Activated CD4-positive, alpha-beta memory T cell treated with anti-CD3 and anti-CD28 coated beads, Interleukin-2, amount 10 ng/mL, durations not matched to agents 7 days and 5 days (primary cell): ENCODE measurements at regions of chr13 and their contacts with region 1.

Region 1: DNA sequence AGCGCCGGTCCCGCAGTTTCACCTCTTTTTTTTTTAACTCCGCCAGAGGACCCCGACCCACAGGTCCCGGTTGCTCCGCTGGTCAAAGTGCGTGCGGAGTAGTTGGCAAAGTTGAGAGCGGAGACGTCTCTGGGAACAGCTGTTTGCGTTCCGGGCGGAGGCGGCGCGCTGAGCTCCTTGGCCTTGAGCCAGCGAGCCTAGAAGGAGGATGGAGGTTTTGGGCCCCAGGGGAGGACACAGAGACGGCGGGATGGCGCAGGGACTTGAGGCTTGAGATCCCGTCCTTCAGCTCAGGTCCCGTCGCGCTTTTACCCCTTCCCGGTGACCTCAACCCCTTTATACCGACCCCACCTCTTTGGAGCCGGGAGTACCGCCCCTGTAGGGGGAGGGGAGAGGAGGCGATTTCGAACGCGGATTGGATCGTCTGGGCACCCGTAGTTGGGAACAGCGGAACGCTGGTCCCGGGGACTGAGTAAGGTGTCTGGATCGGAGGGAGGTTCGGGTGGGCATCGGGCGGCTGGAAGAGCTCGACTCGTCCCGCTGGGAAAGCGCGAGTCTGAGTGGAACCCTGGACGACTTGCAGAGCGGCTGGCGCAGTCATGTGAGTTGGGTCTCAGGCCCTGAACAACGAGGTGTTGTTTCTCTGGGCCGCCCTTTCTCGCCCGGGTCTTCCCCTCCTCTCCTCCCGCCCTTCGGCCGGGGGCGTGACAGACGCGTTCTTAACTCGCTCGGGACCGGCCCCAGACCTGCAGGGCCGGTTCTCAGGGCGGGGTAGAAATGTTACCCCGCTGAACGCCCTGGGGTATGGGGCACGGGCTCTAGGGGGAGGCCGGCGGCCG is at the start of gene WBP4:
- DNase-seq: peak; percentile 89
- H3K4me3 Mint-ChIP-seq: peak within 1 kb of the TSS; percentile 95
- H3K27ac Mint-ChIP-seq: peak within 1 kb of the TSS; percentile 91
- H3K4me1 Mint-ChIP-seq: peaks cover 48% of the 10 kb centered on the region
- H3K27me3 Mint-ChIP-seq: no peaks in the 10 kb centered on the region
- total RNA-seq, gene WBP4: 9.0 to 9.3 TPM

Region 2: DNA sequence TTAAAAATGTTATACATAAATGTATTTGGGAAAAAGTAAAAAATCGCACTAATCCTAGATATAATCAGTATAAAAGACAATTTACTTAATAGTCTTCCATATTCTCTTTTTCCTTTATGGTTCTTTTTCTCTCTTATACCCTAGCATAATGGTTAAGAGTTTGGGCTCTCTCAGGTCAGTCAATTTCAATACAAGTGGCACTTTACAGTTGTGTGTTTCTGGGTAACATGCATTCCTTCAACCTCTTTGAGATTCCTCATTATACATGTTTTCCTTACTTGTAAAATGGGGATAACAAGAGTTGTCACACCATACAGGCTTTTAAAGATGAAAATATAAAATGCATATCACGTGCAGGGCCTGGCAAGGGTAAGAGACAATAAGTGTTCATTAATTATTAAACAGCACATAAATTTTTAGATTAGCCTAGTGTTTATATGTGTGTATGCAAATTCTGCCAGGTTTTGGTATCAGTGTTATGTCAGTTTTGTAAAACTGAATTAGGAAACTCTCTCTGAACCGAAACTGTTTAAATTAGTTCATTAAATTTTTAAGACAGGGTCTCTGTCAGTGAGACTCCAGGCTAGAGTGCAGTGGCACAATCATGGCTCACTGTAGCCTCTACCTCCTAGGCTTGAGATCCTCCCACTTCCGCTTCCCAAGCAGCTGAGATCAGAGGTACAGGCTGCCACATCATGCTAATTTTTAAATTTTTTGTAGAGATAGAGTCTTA is 92.0 kb before region 1 on chr13:
- CTCF ChIA-PET with region 1: interaction called, 27 read pairs
- POLR2A ChIA-PET with region 1: interaction called, 10 read pairs
- DNase-seq: peak; percentile 35
- H3K4me3 Mint-ChIP-seq: no peak overlapping the region
- H3K27ac Mint-ChIP-seq: no peak overlapping the region
- H3K4me1 Mint-ChIP-seq: peaks cover 78% of the 10 kb centered on the region
- H3K27me3 Mint-ChIP-seq: no peaks in the 10 kb centered on the region

Region 3: DNA sequence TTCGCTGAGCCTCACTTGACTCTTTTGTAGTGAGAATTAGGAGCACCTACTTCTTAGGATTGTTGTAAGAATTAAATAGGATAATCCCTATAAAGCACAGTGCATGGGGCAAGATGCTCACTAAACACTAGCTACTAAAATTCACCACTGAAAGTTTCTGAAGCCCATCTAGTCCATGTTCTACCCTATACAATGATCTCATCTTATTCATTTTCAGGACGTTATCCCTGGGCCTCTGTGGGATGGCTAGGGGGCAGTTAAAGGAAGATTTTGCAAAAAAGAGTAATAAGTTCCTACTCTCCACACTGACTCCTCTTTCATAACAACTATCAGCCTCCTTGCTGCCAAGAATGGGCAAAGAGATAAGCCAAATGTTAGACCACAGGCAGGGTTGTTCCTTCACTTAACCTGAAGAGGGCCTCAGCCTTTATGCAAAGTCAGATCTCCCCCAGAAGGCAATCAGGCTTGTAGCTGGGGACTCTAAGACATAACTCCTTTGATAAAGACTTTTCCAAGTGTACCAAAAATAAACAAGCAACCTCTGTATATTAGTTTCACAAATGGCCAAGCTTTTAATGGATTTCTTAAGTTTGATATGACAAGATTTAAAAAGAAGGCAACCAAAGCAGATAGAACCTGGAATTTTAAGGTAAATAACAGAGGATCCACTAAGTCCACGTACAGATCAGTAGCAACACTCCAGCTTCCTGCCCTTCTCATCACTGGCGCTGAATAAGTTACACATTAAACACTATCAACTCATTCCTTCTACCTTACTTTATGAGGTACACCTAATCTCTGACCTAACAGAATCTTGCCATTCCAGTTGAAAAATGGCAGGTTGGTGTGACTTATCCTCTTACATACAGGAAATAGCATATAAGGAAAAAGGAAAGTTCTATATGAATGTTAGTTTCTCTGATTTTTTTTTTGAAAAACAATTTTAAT is 86.6 kb before region 1 on chr13:
- CTCF ChIA-PET with region 1: interaction called, 27 read pairs
- POLR2A ChIA-PET with region 1: interaction called, 20 read pairs
- DNase-seq: peak; percentile 36
- H3K4me3 Mint-ChIP-seq: peak overlapping the region; percentile 19
- H3K27ac Mint-ChIP-seq: peak overlapping the region; percentile 47
- H3K4me1 Mint-ChIP-seq: peaks cover 84% of the 10 kb centered on the region
- H3K27me3 Mint-ChIP-seq: no peaks in the 10 kb centered on the region

Region 4: DNA sequence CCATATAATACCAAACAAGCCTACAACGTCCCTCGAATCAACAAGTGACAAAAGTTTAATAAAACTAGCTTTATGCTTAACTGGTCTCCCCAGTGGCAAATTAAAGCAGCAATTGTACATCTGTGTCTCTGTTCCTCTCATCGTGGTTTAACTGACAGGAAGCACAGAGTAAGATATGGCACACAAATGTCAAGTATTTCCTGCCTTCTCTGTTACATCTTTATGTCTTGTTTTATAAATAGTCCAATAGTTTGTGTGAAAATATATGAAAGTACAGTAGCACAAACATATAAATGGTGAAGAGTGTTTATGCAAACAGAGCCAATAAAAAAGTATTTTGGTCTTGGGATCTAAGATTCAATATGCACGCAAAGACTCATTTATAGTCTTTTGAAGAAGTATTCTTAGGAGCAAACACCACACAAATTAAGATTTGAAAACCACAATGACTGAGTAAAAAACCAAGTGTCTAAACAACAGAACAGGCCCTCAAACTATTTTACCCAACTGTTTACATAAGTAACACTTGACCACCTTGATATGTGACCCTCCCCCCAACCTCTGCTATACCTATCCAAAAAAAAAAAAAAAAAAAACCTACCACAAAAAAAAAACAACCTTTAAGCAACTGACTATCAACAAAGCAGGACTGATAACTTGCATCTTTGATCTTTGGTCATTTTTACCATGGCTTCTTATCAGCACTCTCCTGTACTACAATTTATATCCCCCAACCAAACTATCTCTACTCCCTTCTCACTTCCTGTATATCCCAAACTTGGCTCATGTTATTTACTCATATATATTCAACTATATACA is 56.2 kb before region 1 on chr13:
- CTCF ChIA-PET with region 1: interaction called, 6 read pairs
- POLR2A ChIA-PET with region 1: interaction called, 13 read pairs
- DNase-seq: no peak
- H3K4me3 Mint-ChIP-seq: peak overlapping the region; percentile 55
- H3K27ac Mint-ChIP-seq: peak overlapping the region; percentile 95
- H3K4me1 Mint-ChIP-seq: peaks cover 71% of the 10 kb centered on the region
- H3K27me3 Mint-ChIP-seq: no peaks in the 10 kb centered on the region

Region 5: DNA sequence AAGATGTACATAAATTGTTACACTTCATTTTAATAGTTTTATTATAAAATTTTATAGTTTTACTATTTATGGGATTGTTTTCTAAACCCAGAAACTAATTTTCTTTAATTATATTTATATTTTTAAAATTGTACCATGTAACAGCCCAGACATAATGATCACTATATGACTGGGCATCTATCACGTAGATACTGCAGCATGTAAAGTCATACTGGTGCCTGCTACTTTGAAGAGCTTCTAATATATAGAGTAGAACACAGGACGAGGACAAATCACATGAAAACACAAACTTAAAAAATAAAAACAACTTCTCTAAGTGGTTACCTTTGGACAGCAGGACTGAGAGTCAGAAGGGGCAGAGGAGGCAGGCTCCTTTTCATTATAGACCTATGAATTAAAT is 47.5 kb before region 1 on chr13:
- CTCF ChIA-PET with region 1: interaction called, 33 read pairs
- POLR2A ChIA-PET with region 1: interaction called, 147 read pairs
- DNase-seq: no peak
- H3K4me3 Mint-ChIP-seq: peak overlapping the region; percentile 80
- H3K27ac Mint-ChIP-seq: peak overlapping the region; percentile 62
- H3K4me1 Mint-ChIP-seq: peaks cover 51% of the 10 kb centered on the region
- H3K27me3 Mint-ChIP-seq: no peaks in the 10 kb centered on the region

Region 6: GRCh38 chr13:41111454-41111853 is 50.2 kb after region 1 on chr13:
- CTCF ChIA-PET with region 1: no interaction called
- POLR2A ChIA-PET with region 1: no interaction called
- DNase-seq: no peak
- H3K4me3 Mint-ChIP-seq: no peak overlapping the region
- H3K27ac Mint-ChIP-seq: no peak overlapping the region
- H3K4me1 Mint-ChIP-seq: no peaks in the 10 kb centered on the region
- H3K27me3 Mint-ChIP-seq: no peaks in the 10 kb centered on the region